PC-9 (cell line): ENCODE measurements at regions of chr15 and their contacts with region 1.

Region 1: GRCh38 chr15:20386198-20386597 is 155.4 kb downstream of the GOLGA6L6 start:
- DNase-seq: no peak
- H3K4me3 ChIP-seq: no peak overlapping the region
- H3K27ac ChIP-seq: no peak overlapping the region
- H3K4me1 ChIP-seq: no peaks in the 10 kb centered on the region
- H3K27me3 ChIP-seq: no peaks in the 10 kb centered on the region
- CTCF ChIP-seq: no peak

Region 2: DNA sequence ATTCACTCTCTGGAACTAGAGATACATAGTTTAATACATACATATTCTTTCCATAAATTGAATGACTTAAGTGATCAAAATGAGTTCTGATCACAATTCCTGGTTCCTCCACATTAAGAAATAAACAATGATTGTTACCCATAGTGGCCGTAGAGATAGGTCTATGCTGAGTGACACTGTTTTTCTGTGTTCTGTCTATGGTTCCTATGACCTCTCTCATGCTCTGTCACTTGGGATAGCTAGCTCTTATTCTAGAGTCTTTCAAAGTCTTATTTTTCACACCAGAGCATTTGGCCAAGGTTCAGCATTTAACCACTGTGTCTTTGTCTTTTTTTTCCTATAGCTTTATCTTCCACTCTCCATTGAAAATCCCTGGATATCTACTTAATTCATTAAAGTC is 23.0 kb after region 1 on chr15:
- CTCF ChIA-PET with region 1: no interaction called
- POLR2A ChIA-PET with region 1: no interaction called
- intact Hi-C with region 1: loop called (anchors 2 kb)
- DNase-seq: no peak
- H3K4me3 ChIP-seq: no peak overlapping the region
- H3K27ac ChIP-seq: no peak overlapping the region
- H3K4me1 ChIP-seq: no peaks in the 10 kb centered on the region
- H3K27me3 ChIP-seq: no peaks in the 10 kb centered on the region
- CTCF ChIP-seq: no peak

Region 3: GRCh38 chr15:20645956-20646355 is 259.8 kb after region 1 on chr15:
- CTCF ChIA-PET with region 1: no interaction called
- POLR2A ChIA-PET with region 1: no interaction called
- intact Hi-C with region 1: no loop called
- DNase-seq: no peak
- H3K4me3 ChIP-seq: no peak overlapping the region
- H3K27ac ChIP-seq: no peak overlapping the region
- H3K4me1 ChIP-seq: no peaks in the 10 kb centered on the region
- H3K27me3 ChIP-seq: peaks cover 39% of the 10 kb centered on the region
- CTCF ChIP-seq: no peak